ENCODE measurements at regions of chr14 and their contacts with region 1.

Region 1: GRCh38 chr14:49971156-49972130 is 78.6 kb downstream of the ARF6 start:
- DNase-seq: no peak
- ATAC-seq: peak in 1 of 2 experiments; percentile 42; a peak in 3 of 6 replicates
- H3K4me3 ChIP-seq: no peak overlapping the region
- H3K27ac ChIP-seq: peak overlapping the region; percentile 87 to 88
- H3K4me1 ChIP-seq: peaks cover 76% of the 10 kb centered on the region
- CTCF ChIP-seq: no peak
- EP300 ChIP-seq: no peak
- POLR2A ChIP-seq: no peak
- RAD21 ChIP-seq: no peak

Region 2: GRCh38 chr14:49892636-49893308 is 78.7 kb before region 1 on chr14 and contains the start of gene ARF6:
- CTCF ChIA-PET with region 1: interaction called, 10 read pairs
- POLR2A ChIA-PET with region 1: interaction called, 16 read pairs
- DNase-seq: peak; percentile 87 to 98
- ATAC-seq: peak; percentile 94 to 95
- H3K4me3 ChIP-seq: peak within 1 kb of the TSS; percentile 67
- H3K27ac ChIP-seq: peak within 1 kb of the TSS; percentile 96 to 98
- H3K4me1 ChIP-seq: peaks cover 21% of the 10 kb centered on the region
- CTCF ChIP-seq: 0 out of 3 replicates have a peak, but pooled peaks have one; percentile 12
- EP300 ChIP-seq: no peak
- POLR2A ChIP-seq: peak; percentile 78
- RAD21 ChIP-seq: peak; percentile 18 to 46; a peak in 4 of 5 replicates
- polyA plus RNA-seq, gene ARF6: 29.8 and 33.3 TPM in 2 replicates

Region 3: GRCh38 chr14:50003213-50004031 is 32.0 kb after region 1 on chr14:
- CTCF ChIA-PET with region 1: interaction called, 5 read pairs
- POLR2A ChIA-PET with region 1: interaction called, 10 read pairs
- DNase-seq: peak; percentile 75 to 80
- ATAC-seq: peak; percentile 49 to 66
- H3K4me3 ChIP-seq: peak overlapping the region; percentile 48
- H3K27ac ChIP-seq: peak overlapping the region; percentile 90 to 94
- H3K4me1 ChIP-seq: peaks cover 64% of the 10 kb centered on the region
- CTCF ChIP-seq: no peak; the same call in 1 of the 3 replicates
- EP300 ChIP-seq: no peak
- POLR2A ChIP-seq: peak; percentile 66
- RAD21 ChIP-seq: peak; percentile 23 to 67

Measured in A549 (cell line).